ENCODE measurements at regions of chr17 and their contacts with region 1.

Region 1: DNA sequence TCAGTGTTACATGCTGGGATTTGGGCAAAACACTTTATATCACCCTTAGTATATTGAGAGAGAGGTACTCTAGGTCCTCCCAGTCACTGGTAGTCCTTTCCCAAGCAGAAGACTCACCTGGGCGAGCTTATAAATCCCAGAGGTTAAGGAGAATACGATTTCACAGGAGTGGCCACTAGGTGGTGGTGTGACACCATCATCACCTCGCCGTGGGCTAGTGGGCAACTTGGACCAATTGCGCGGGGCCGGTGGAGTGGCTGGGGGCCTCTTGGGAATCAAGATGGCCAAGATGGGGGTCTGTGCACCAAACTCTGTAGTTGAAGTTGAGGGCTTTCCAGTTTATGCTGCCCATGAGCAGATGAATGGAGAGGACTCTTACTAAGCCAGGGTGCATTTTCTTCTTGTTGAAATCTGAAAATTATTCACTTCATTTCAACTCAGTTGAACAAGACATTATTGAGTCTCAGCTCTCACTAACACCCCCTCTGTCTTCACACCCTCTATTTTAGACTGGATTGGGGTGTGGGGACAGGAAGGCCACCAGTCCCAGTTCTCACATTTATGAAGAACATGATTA is 38.2 kb upstream of the PIRT start:
- DNase-seq: peak; percentile 30
- H3K4me3 Mint-ChIP-seq: no peak overlapping the region
- H3K27ac Mint-ChIP-seq: no peak overlapping the region
- H3K4me1 Mint-ChIP-seq: peaks cover 2% of the 10 kb centered on the region
- H3K27me3 Mint-ChIP-seq: peaks cover 7% of the 10 kb centered on the region

Region 2: DNA sequence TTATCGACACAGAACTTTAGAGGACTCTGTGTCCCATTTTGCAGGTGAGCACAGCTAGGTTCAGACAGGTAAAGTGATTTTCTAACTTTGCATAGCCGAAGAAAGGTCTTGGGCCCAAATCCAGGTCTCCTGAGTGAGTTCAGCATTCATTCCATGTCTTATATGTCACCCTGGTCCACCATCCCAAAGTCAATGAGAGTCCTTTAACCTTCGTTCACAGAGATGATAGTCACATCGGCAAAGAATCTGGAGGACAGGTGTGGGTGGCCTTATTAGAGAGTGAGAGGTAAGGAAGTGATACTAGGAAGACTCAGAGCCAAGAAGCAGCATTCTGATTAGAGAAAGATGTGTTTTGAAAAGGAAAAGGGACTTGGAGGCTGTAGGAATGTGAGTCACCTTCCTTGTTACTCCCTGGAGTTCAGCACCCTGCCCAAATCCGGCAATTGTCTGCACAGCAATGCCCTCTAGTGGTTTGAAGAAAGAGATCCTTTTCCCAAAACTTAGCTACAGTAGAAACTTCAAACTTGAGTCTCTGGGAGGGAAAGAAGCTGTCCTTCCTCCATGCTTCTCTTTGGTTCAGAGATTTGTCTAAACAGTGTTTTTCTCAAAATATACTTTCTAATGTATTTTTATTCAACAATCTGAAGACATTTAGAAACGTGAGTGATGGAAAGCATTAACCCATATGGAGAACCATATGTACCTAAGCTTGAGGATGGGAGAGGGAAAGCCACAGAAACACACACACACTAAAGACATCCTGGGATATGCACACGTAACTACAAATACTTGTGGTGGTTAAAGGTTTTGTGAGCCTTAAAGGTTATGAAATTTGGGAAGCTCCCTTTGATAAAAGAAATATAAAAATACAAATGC is 268.5 kb after region 1 on chr17:
- CTCF ChIA-PET with region 1: interaction called, 20 read pairs
- POLR2A ChIA-PET with region 1: no interaction called
- intact Hi-C with region 1: loop called (anchors 5 kb)
- DNase-seq: no peak
- H3K4me3 Mint-ChIP-seq: no peak overlapping the region
- H3K27ac Mint-ChIP-seq: no peak overlapping the region
- H3K4me1 Mint-ChIP-seq: no peaks in the 10 kb centered on the region
- H3K27me3 Mint-ChIP-seq: no peaks in the 10 kb centered on the region

Region 3: DNA sequence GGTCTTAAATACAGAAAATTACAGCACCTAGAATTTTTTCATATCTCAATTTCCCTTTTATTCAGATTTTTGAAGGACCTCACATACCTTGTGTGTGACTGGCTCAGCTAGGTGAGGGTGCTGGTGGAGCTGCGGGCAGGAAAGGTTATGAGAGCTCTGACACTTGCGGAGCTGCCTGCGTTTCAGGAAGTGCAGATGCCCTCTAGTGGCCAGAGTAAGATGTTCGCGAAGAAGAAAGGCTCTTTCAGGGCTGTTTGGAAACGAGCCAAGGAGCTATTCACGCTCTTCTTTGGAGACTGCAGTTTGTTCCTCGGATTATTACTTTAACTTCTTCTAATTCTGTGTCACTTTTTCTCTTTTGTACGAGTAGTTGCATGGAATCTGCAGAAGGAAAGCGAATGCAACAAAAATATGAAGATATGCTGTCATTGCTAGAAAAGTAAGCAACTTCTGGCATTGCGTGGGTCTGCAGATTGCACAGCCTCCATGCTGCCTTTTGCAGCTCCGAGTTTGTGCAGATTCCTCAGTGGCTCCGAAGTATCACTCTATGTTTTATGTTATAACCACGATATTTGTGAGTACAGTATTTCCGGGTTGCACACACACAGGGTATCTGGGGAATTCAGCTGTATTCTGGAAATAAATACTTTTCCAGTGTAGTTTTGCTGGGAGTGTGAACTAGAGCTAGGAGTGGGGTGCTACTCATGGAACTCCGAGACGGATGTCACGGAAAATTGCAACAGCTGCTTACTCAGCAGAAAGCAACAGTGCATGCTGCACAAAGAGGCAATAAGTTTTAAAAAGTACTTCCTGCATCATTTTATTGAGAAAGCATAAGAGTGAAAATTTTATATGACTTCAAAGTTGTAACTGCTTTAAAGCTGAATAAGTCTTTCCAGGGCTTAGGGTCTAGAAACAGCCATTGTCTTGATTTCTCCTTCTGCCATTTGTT is 768.5 kb after region 1 on chr17:
- CTCF ChIA-PET with region 1: interaction called, 23 read pairs
- POLR2A ChIA-PET with region 1: no interaction called
- intact Hi-C with region 1: no loop called
- DNase-seq: peak; percentile 45
- H3K4me3 Mint-ChIP-seq: no peak overlapping the region
- H3K27ac Mint-ChIP-seq: no peak overlapping the region
- H3K4me1 Mint-ChIP-seq: no peaks in the 10 kb centered on the region
- H3K27me3 Mint-ChIP-seq: no peaks in the 10 kb centered on the region

Region 4: GRCh38 chr17:11986942-11987329 is 1110.9 kb after region 1 on chr17:
- CTCF ChIA-PET with region 1: interaction called, 5 read pairs
- POLR2A ChIA-PET with region 1: no interaction called
- intact Hi-C with region 1: loop called (anchors 10 kb)
- DNase-seq: no peak
- H3K4me3 Mint-ChIP-seq: no peak overlapping the region
- H3K27ac Mint-ChIP-seq: no peak overlapping the region
- H3K4me1 Mint-ChIP-seq: peaks cover 4% of the 10 kb centered on the region
- H3K27me3 Mint-ChIP-seq: no peaks in the 10 kb centered on the region

Measured in activated CD4-positive, alpha-beta memory T cell treated with anti-CD3 and anti-CD28 coated beads for 36 hours (primary cell).